ENCODE measurements at regions of chr17 and their contacts with region 1.

Region 1: DNA sequence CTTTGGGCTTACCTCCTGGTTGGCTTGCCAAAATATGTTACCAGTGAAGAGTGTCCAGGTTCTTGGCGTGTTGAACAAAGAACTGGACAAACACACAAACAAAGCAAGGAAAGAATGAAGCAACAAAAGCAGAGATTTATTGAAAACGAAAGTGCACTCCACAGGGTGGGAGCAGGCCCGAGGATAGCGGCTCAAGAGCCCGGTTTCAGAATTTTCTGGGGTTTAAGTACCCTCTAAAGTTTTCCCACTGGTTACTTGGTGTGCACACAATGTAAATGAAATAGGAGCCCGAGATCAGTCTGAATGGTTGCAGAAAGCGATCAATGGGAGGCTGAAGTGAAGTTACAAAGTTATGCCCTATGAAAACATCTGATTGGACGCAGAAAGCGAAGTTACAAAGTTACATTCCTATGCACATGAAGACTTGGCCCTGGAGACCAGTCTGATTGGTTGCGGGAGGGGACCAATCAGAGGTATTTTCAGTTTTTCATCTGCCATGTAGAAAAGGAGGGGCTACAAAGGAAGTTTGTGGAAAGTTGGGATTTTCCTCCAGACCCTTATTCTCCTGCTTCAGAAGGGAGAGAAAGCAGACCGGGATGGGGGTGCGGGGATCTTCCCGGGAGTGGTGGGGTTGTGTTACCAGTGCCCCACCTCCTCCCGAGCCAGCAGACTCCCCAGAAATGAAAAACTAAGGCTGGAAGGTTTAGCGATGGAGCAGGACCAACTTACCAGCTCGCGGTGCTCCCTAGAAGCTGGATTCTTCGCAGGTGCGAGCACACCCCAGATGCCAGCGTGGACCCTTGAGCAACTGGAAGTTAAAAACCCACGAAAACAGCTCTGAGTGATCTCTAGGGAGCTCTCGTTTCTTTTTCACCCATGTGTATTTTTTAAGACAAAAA is at the start of gene SLFN12:
- DNase-seq: peak; percentile 92
- H3K4me3 Mint-ChIP-seq: peak within 1 kb of the TSS; percentile 79
- H3K27ac Mint-ChIP-seq: peak within 1 kb of the TSS; percentile 85
- H3K4me1 Mint-ChIP-seq: peaks cover 21% of the 10 kb centered on the region
- H3K27me3 Mint-ChIP-seq: no peaks in the 10 kb centered on the region
- CTCF ChIP-seq: no peak
- total RNA-seq, gene SLFN12: 6.3 and 8.0 TPM in 2 replicates

Region 2: DNA sequence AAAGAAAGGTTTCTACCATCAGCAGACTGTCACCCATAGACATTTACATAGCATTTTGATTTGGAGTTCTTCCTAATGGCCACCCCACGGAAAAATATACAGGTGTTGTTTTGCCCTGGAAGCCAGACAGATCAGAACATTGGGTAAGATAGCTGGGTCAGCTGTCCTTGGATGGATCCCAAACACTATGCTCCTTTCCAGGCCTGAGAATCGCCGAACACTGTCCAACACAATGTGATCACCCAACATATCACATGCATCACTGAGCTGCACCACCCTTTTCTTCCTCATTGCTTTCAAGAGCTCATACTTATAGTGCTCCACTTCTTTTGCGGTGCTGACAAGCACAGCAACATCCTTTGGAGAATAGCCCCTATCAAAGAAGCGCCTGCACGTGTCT is 80.1 kb before region 1 on chr17:
- CTCF ChIA-PET with region 1: no interaction called
- POLR2A ChIA-PET with region 1: no interaction called
- intact Hi-C with region 1: no loop called
- DNase-seq: no peak
- H3K4me3 Mint-ChIP-seq: no peak overlapping the region
- H3K27ac Mint-ChIP-seq: no peak overlapping the region
- H3K4me1 Mint-ChIP-seq: no peaks in the 10 kb centered on the region
- H3K27me3 Mint-ChIP-seq: peaks cover 81% of the 10 kb centered on the region
- CTCF ChIP-seq: no peak

Region 3: DNA sequence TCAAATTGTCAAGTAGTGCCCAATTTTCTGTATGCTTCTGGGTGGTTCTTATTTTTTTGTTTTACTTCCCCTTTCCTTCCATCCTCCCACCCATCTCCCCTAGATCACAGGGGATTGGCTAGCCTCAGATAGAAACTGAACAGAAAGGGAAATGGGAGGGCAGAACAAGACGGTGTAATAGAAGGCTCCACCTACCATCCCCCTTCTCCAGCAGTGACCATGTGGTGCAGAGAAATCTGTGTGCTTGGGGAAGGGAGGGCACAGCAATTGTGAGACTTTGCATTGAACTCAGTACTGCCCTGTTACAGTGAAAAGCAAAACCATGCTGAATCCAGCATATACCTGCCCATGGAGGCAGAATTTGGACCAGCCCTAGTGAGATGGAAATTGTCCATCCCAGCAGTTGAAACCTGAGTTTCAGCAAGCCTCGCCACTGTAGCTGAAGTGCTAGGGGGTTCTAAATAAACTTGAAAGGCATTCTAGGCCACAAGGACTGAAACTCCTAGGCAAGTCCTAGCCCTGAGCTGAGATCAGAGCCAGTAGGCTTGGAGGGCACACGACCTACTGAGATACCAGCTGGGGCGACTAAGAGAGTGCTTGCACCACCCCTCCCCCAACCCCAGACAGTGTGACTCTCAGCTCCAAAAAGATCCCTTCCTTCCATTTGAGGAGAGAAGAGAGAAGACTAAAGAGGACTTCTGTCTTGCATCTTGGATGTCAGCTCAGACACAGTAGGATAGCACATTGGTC is 64.2 kb before region 1 on chr17:
- CTCF ChIA-PET with region 1: no interaction called
- POLR2A ChIA-PET with region 1: no interaction called
- intact Hi-C with region 1: no loop called
- DNase-seq: no peak
- H3K4me3 Mint-ChIP-seq: no peak overlapping the region
- H3K27ac Mint-ChIP-seq: no peak overlapping the region
- H3K4me1 Mint-ChIP-seq: no peaks in the 10 kb centered on the region
- H3K27me3 Mint-ChIP-seq: peaks cover 95% of the 10 kb centered on the region
- CTCF ChIP-seq: no peak

Region 4: DNA sequence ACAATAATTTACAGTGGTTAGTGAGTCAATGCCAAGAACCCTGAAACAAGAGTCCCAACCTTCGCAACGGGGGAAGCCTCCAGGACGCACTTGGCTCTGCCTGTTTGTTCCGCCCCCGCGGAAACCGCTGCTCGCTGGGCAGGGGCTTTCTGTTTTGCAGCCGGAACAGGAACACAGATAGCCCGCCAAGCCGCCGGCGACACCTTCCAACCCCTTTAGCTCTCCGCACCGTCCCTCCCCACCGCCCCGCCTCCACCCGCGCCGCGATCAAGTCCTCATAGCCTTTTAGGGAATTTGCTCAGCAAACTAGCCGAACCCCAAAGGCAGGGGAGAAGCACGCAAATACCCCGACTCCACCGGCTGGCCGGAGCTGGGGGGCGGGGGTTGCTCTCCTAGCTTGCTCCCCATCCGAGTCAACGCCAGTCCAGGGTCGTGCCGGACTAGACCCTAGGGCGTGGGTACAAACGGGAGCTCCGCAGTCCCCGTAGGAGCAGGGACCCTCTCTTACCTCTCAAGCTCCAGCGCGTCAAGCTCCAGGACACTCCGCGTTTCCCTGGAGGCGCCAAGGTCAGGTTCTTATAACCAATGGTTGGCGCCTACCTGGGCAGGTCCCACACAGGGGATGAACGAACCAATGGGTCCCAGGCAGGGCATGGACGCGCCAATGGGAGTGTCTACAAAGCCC is 15.9 kb after region 1 on chr17 and contains the start of gene SLFN13:
- CTCF ChIA-PET with region 1: interaction called, 3 read pairs
- POLR2A ChIA-PET with region 1: interaction called, 32 read pairs
- intact Hi-C with region 1: no loop called
- DNase-seq: peak; percentile 81
- H3K4me3 Mint-ChIP-seq: peak within 1 kb of the TSS; percentile 78
- H3K27ac Mint-ChIP-seq: peak within 1 kb of the TSS; percentile 22
- H3K4me1 Mint-ChIP-seq: no peaks in the 10 kb centered on the region
- H3K27me3 Mint-ChIP-seq: no peaks in the 10 kb centered on the region
- CTCF ChIP-seq: no peak
- total RNA-seq, gene SLFN13: 1.7 and 2.1 TPM in 2 replicates

Region 5: DNA sequence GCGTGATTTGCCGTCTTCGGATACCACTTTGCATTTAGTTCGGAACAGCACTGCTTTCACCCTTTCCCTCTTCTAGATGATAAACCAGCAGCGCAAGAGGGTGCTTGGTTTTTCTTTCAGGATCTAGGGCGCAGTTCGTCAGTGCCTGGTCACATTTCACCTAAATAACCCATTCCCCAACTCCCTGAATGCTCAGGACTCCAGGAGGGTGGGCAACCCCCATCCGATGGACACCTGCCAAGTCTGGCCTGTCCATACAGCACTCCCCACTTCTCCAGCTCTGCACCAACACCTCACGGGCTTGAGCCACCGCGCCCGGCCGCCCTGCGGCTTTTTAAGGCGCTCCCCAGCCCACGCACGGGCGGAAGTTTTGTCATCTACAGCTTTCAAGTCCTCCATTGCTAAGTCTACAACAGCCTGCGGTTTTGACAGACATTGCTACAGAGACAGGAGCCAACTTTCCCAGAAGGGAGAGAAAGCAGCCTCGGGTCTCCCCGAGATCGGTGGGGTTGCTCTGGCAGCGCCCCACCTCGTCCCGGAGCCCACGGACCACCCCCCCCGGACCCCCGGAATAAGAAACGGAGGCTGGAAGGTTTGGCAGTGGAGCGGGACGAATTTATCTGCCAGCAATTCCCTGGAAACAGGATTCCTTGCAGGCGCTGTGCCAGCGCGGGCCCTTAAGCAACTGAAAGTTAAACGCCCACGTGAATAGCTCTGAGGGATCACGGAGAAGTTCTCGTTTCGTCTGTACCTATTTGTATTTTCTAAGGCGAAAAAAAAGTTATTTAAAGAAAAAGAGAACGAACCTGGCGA is 54.7 kb after region 1 on chr17:
- CTCF ChIA-PET with region 1: interaction called, 3 read pairs
- POLR2A ChIA-PET with region 1: interaction called, 11 read pairs
- intact Hi-C with region 1: no loop called
- DNase-seq: peak; percentile 88
- H3K4me3 Mint-ChIP-seq: peak overlapping the region; percentile 82
- H3K27ac Mint-ChIP-seq: peak overlapping the region; percentile 42
- H3K4me1 Mint-ChIP-seq: peaks cover 8% of the 10 kb centered on the region
- H3K27me3 Mint-ChIP-seq: peaks cover 52% of the 10 kb centered on the region
- CTCF ChIP-seq: no peak

Measured in MCF 10A (cell line).